ENCODE measurements at regions of chr4 and their contacts with region 1.

Region 1: GRCh38 chr4:90293320-90293719 is 166.1 kb downstream of the CCSER1 start:
- DNase-seq: no peak
- H3K4me3 ChIP-seq: no peak overlapping the region
- H3K27ac ChIP-seq: no peak overlapping the region
- H3K4me1 ChIP-seq: no peaks in the 10 kb centered on the region
- H3K27me3 ChIP-seq: no peaks in the 10 kb centered on the region
- CTCF ChIP-seq: no peak; the same call in 1 of the 2 replicates

Region 2: DNA sequence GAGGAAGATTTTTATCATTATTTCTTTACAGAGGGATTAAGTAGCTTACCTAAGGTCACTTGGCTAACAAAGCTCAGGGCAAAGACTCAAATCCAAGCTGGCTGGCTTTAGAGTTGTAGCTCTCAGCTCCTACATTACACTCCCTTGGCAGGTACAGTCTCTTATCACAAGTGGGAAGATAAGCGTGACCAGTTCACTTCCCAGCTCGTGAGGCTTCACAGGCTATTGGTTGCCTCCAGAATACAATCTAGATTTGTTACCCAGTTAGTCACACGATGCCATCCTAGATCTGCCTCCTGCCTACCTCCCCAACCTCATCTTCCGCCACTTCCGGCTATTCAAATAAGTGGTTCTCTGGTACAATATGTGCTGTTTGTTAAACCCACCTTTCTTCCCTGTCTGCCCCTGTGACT is 395.0 kb before region 1 on chr4:
- CTCF ChIA-PET with region 1: no interaction called
- POLR2A ChIA-PET with region 1: no interaction called
- intact Hi-C with region 1: no loop called
- DNase-seq: no peak
- H3K4me3 ChIP-seq: no peak overlapping the region
- H3K27ac ChIP-seq: no peak overlapping the region
- H3K4me1 ChIP-seq: peaks cover 8% of the 10 kb centered on the region
- H3K27me3 ChIP-seq: no peaks in the 10 kb centered on the region
- CTCF ChIP-seq: no peak

Region 3: DNA sequence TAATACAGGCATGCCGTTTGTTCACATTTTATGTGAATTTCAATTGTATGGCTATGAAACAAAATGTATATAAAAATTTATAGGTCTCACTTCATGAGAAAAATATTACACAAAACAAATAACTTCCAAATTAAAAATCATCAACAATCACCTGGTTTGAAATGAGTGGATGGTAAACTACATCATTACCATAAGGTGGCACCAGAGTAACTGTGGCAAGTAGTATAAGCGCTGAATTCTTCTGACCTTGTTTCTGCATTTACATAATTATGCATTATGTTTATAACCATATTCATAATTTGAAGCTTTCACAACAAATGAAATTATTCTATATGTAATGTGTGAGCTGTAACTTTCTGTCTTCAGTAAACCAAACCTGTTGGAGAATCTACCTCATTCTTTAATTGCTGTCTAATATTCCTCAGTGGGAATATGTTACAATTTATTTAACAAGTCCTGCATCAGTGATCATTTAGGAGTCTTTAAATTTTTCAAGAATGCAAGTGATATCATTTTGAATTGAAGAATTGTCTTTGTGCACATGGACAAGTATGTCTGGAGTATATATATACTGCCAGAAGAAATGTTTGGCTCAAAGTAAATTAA is 343.4 kb before region 1 on chr4:
- CTCF ChIA-PET with region 1: no interaction called
- POLR2A ChIA-PET with region 1: no interaction called
- intact Hi-C with region 1: loop called (anchors 10 kb)
- DNase-seq: no peak
- H3K4me3 ChIP-seq: no peak overlapping the region
- H3K27ac ChIP-seq: no peak overlapping the region
- H3K4me1 ChIP-seq: no peaks in the 10 kb centered on the region
- H3K27me3 ChIP-seq: no peaks in the 10 kb centered on the region
- CTCF ChIP-seq: peak; percentile 38; the same call in 1 of the 2 replicates

Region 4: DNA sequence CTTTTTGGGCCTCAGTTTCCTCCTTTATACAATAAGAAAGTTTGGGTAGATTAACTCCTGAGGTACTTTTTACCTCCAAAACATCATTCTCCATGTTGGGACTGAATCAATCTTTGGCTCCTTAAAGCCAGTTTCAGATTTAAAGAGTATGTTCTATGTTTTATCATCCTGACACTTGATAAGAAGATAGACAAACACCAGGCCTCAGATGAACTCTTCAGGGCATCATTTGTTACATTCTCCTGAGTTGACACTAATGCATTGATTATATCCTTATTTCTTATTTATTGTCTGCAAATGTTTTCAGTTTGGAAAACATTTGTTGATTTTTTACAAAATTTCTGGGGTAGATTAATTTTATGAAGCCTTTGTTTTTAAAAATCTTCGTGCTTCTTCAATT is 268.8 kb before region 1 on chr4:
- CTCF ChIA-PET with region 1: no interaction called
- POLR2A ChIA-PET with region 1: no interaction called
- intact Hi-C with region 1: loop called (anchors 5 kb)
- DNase-seq: no peak
- H3K4me3 ChIP-seq: no peak overlapping the region
- H3K27ac ChIP-seq: no peak overlapping the region
- H3K4me1 ChIP-seq: no peaks in the 10 kb centered on the region
- H3K27me3 ChIP-seq: no peaks in the 10 kb centered on the region
- CTCF ChIP-seq: no peak

Region 5: DNA sequence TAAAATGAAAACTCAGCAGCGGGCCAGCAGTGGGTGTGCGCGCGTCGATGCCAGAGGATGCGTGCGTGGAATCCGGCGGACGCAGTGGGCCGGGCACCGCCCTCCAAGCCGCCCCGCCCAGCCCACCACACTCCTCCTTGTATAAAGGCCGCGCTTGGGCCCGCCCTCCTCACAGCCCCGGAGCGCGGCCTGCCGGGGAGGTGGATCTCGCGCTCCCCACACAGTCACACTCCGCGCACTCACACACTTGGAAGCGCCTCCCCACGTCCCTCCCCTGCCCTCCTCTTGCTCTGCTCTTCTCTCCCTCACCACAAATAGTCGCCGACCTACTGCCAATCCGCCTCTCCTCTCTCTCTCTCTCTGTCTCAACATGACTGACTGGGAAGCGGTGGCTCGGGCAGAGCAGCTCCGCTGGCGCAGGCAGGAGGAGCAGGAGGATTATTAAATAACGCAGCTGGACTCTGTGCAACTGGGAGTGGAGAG is 166.1 kb before region 1 on chr4 and contains the start of gene CCSER1:
- CTCF ChIA-PET with region 1: no interaction called
- POLR2A ChIA-PET with region 1: no interaction called
- intact Hi-C with region 1: loop called (anchors 10 kb)
- DNase-seq: peak; percentile 22
- H3K4me3 ChIP-seq: peak within 1 kb of the TSS; percentile 44
- H3K27ac ChIP-seq: no peak within 1 kb of the TSS
- H3K4me1 ChIP-seq: no peaks in the 10 kb centered on the region
- H3K27me3 ChIP-seq: peaks cover 15% of the 10 kb centered on the region
- CTCF ChIP-seq: no peak
- total RNA-seq, gene CCSER1: not detected in 2 replicates

Region 6: DNA sequence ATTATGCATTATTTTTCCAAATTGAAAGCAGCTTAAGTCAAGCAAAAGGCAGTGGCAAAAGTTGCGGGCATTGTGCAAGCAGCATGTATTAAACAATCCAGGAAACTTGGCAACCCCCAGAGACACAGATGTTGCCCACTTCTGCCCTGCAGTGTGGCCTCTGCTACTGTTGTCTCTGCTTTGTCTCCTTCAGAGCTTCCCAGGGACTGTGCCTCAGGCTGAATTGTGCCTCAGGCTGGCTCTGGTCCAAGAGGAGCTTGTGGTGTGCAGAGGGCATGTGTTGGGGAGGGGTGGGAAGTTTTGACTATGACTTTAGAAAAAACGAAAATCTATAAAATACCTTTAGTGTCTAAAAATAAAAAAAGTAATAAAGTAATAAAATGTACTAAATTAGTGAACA is 35.2 kb after region 1 on chr4:
- CTCF ChIA-PET with region 1: no interaction called
- POLR2A ChIA-PET with region 1: no interaction called
- intact Hi-C with region 1: no loop called
- DNase-seq: peak; percentile 45
- H3K4me3 ChIP-seq: no peak overlapping the region
- H3K27ac ChIP-seq: no peak overlapping the region
- H3K4me1 ChIP-seq: no peaks in the 10 kb centered on the region
- H3K27me3 ChIP-seq: no peaks in the 10 kb centered on the region
- CTCF ChIP-seq: no peak

Region 7: DNA sequence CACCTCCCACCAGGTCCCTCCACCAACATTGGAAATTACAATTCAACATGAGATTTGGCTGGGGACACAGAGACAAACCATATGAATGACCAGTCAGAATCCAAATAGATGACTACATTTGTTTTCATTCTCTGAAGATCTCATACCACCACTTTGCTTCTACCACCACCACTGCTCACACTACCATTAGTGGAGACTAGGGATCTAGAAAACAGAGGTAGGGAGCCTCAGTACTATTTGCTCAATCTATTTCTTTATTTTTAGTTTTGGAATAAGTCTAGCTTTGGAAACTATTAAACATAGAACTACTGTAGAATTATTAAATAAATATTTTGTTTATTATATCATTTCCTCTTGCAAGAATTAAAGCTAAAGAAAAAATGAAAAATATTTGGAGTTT is 561.8 kb after region 1 on chr4:
- CTCF ChIA-PET with region 1: no interaction called
- POLR2A ChIA-PET with region 1: no interaction called
- intact Hi-C with region 1: no loop called
- DNase-seq: no peak
- H3K4me3 ChIP-seq: no peak overlapping the region
- H3K27ac ChIP-seq: no peak overlapping the region
- H3K4me1 ChIP-seq: no peaks in the 10 kb centered on the region
- H3K27me3 ChIP-seq: no peaks in the 10 kb centered on the region
- CTCF ChIP-seq: no peak

Measured in A673 (cell line).